ENCODE measurements at regions of chr7 and their contacts with region 1.

Region 1: DNA sequence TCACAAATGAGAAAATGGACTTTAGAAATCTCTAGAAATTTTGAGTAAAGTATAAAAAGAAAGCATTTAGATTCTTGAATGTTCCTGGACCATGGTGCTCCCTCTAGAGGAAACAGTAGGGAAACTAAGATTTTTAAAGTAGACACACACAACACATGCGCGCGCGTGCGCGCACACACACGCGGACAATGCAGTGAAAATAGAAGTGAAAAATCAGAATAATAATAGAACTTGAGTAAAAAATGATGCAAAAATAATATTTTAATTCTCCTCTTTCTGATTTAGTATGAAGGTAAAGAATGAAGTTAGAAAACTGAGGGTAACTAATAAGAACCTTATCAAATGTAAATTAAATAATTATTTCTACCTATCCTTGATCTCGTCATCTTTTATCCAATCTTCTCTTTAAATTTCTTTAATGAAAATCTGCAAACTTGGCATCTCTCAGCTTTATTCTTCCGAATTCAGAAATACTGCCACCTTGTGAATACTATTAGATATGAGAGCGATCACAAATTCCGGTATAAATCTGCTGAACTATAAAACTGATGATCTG is 117.0 kb upstream of the AMPH start:
- DNase-seq: no peak
- H3K4me3 ChIP-seq: no peak overlapping the region
- CTCF ChIP-seq: peak; percentile 23

Region 2: GRCh38 chr7:38451840-38452239 is 296.3 kb before region 1 on chr7:
- CTCF ChIA-PET with region 1: interaction called, 15 read pairs
- POLR2A ChIA-PET with region 1: no interaction called
- DNase-seq: no peak
- H3K4me3 ChIP-seq: no peak overlapping the region
- CTCF ChIP-seq: peak; percentile 32

Region 3: DNA sequence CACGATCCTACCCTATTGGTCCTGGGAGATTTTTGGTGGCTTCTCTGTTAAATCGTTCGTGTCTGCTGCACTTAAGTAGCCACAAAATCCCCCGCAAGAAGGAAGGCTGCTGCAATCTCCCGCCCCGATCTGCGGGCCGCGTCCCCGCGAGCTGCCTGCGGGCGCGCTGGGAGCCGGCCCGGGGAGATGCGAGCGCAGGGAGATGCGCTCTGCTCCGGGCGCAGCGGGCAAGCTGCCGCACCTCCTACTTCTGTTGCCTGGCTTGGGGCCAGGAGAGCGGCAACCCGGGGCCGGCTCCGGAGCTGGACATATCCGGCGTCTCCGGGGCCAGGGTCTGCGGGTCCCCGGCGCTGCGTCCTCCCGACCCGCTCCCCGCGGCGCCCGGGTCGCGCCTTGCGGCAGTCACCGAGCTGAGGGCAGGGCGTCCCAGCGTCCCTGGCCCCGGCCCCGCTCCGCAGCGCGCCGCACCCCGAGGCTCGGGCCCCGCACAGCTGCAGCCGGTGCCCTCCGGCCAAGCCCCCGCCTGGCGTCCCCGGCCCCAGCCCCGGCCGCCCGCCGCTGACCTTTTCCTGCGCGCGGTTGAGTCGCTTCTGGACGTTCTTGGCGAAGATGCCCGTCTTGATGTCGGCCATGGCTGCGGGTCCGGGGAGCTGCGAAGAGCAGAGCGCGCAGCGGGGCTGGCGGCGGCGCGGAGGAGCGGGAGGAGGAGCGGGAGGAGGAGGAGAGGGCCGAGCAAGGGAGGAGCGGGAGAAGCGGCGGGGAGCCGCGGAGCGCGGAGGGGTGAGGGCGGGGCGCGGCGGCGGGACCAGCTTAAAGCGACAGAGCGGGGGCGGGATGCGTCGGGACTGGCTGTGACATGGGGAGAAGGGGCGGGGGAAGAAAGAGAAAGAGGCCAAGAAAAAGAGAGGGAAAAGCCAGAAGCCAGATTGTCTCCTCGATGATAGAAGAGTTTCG is 117.1 kb before region 1 on chr7 and contains the start of gene AMPH:
- CTCF ChIA-PET with region 1: no interaction called
- POLR2A ChIA-PET with region 1: no interaction called
- DNase-seq: no peak
- H3K4me3 ChIP-seq: peak within 1 kb of the TSS; percentile 63
- CTCF ChIP-seq: no peak

Region 4: DNA sequence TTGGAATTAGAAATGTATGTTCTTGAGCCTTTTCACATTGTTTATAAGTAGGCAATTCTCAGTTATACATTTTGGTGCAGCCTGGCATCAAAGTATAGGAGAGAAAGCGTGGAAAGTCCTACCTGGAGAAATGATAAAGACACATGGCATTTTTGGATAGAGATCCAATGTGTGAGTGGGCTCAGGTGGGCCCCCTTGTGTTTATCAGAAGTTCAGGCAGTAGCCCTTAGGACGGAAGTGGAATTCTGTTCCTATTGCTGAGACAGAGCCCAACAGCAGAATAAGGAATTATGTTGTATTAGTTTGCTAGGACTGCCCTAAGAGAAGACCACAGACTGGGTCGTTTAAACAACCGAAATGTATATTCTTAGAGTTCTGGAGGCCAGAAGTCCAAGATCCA is 31.7 kb before region 1 on chr7:
- CTCF ChIA-PET with region 1: no interaction called
- POLR2A ChIA-PET with region 1: no interaction called
- DNase-seq: no peak
- H3K4me3 ChIP-seq: no peak overlapping the region
- CTCF ChIP-seq: no peak

Measured in AG04449 (cell line).